ENCODE measurements at regions of chr2 and their contacts with region 1.

Region 1: GRCh38 chr2:219388127-219388844 is 574 bp upstream of the DNPEP start:
- DNase-seq: peak; percentile 99
- H3K4me3 Mint-ChIP-seq: peak overlapping the region; percentile 75
- H3K27ac Mint-ChIP-seq: peak overlapping the region; percentile 84
- H3K4me1 Mint-ChIP-seq: peaks cover 12% of the 10 kb centered on the region
- H3K27me3 Mint-ChIP-seq: peaks cover 9% of the 10 kb centered on the region

Region 2: GRCh38 chr2:218395797-218396687 is 992.2 kb before region 1 on chr2:
- intact Hi-C with region 1: loop called (anchors 5 kb)
- DNase-seq: peak; percentile 98
- H3K4me3 Mint-ChIP-seq: peak overlapping the region; percentile 83
- H3K27ac Mint-ChIP-seq: peak overlapping the region; percentile 90
- H3K4me1 Mint-ChIP-seq: peaks cover 26% of the 10 kb centered on the region
- H3K27me3 Mint-ChIP-seq: no peaks in the 10 kb centered on the region

Region 3: DNA sequence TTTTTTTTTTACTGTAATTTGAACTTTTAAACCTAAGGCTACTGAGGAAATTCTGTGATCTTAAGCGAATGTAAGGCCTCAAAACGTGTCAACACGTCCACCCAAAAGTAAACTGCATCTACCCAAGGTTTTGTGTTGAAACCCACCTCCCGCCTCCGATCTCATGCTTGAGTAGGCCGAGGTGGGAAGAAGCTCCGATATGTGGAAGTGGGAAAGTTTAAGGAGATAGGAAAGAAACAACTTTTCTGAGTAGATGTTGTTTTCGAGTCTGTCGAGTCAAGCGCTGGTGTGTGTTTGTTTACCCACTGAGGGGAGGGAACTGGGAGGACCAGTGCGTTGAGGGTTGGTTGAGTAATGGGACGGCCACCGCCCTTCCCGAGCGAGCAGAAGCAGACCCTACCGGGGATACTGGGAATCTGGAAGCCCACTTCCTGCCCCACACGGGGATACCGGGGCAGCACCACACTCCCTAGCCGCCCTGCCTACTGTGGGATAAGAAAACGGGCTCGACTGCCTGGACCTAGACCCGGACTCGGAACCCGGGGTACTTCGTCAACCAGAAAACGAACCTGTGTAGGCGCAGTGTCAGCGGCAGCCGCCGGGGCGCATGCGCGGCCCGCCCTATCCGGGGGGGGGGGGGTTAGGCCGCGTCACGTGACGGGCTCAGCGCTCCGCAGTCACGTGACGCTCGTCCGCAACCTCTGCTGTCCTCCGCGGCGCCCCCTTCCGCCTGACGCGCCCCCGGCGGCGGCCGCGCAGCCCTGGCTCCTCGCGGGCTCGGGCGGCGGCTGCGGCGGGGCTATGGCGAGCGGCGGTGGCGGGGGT is 210.5 kb before region 1 on chr2 and contains the start of gene RETREG2:
- intact Hi-C with region 1: loop called (anchors 1 kb)
- DNase-seq: peak; percentile 93
- H3K4me3 Mint-ChIP-seq: peak within 1 kb of the TSS; percentile 94
- H3K27ac Mint-ChIP-seq: peak within 1 kb of the TSS; percentile 99
- H3K4me1 Mint-ChIP-seq: peaks cover 62% of the 10 kb centered on the region
- H3K27me3 Mint-ChIP-seq: no peaks in the 10 kb centered on the region
- total RNA-seq, gene RETREG2: 54.1 and 57.4 TPM in 2 replicates

Region 4: DNA sequence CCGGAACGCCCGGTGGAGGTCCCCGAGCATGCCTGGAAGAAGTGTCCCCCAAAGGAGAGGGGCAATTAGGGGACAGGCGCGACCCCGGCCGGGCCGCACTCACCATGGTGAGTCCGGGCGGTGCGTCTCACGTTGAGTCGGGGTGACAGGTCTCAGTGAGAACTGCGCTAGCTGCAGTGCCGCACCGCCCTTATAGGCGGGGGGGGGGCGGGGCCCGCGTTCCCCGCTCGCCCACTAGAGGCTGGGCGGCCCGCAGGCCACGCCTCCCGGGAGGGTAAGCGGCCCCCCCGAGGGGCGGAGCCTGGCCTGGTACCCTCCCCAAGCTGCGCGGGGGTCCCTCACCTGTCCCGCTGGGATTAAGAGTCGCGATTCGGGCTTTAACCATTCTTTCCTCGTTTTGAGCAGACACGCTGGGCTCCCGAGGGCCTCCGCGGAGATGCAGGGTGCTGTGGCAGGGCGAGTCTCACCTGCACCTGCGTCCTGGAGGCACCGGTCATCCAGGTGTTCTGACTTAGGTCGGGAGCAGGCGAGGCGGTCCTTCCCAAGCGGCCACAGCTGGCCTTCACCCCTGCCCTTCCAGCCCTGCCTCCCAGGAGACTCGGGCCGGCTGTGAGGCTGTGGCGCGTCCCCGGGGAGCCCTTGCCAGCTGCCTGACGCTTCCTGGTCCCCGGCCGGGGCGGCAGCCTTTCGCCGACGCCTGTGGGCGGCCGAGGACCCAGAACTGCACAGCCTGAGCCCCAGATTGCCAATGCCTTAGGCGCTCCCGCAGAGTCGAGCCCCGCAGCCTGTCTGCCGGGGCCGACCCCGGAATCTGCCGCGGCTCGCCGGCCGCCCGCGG is 134.3 kb before region 1 on chr2 and contains the start of gene TUBA4A:
- intact Hi-C with region 1: loop called (anchors 2 kb)
- DNase-seq: peak; percentile 97
- H3K4me3 Mint-ChIP-seq: peak within 1 kb of the TSS; percentile 80
- H3K27ac Mint-ChIP-seq: peak within 1 kb of the TSS; percentile 91
- H3K4me1 Mint-ChIP-seq: peaks cover 47% of the 10 kb centered on the region
- H3K27me3 Mint-ChIP-seq: no peaks in the 10 kb centered on the region
- total RNA-seq, gene TUBA4A: 235 and 240 TPM in 2 replicates

Region 5: GRCh38 chr2:219402665-219403515 is 14.6 kb after region 1 on chr2:
- intact Hi-C with region 1: loop called (anchors 1 kb)
- DNase-seq: peak; percentile 86
- H3K4me3 Mint-ChIP-seq: no peak overlapping the region
- H3K27ac Mint-ChIP-seq: no peak overlapping the region
- H3K4me1 Mint-ChIP-seq: no peaks in the 10 kb centered on the region
- H3K27me3 Mint-ChIP-seq: peaks cover 9% of the 10 kb centered on the region

Region 6: DNA sequence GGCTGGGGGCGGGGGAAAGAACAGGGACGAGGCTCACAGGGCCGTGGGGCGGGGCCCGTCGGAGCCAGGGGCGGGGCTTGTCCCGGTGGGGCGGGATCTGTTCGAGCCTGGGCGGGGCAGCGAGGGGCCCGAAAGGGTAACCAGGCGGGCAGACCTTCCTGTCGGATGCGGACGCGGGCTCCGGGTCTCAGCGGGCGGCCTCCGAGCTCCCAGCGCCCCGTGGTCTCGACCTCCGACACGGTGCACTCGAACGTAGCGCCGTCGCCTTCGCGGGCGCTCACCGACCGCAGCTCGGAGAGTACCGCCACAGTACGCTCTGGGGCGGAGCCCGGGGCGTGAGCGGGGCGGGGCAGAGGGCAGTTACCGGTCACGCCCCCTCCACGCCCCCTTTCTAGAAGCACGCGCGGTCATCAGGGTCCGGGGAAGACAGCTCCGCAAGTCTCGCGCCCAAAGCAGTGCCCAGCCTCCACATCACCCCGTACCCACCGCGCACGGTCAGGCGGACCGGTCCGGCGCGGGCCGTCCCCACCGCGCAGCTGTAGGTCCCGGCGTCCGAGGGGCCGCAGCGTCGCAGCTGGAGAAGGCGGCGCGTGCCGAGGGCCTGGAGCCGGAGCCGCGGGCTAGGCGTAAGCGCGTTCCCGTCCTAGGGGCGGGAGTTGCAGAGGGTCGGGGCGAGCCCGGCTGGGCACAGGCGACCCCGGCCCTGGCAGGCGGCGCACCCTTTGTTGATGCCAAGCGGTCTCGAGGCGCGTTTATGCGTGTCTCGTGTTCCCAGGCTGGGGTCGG is 164.3 kb after region 1 on chr2:
- intact Hi-C with region 1: loop called (anchors 1 kb)
- DNase-seq: peak; percentile 96
- H3K4me3 Mint-ChIP-seq: peak overlapping the region; percentile 88
- H3K27ac Mint-ChIP-seq: peak overlapping the region; percentile 58
- H3K4me1 Mint-ChIP-seq: peaks cover 5% of the 10 kb centered on the region
- H3K27me3 Mint-ChIP-seq: peaks cover 23% of the 10 kb centered on the region